ENCODE measurements at regions of chr9 and their contacts with region 1.

Region 1: DNA sequence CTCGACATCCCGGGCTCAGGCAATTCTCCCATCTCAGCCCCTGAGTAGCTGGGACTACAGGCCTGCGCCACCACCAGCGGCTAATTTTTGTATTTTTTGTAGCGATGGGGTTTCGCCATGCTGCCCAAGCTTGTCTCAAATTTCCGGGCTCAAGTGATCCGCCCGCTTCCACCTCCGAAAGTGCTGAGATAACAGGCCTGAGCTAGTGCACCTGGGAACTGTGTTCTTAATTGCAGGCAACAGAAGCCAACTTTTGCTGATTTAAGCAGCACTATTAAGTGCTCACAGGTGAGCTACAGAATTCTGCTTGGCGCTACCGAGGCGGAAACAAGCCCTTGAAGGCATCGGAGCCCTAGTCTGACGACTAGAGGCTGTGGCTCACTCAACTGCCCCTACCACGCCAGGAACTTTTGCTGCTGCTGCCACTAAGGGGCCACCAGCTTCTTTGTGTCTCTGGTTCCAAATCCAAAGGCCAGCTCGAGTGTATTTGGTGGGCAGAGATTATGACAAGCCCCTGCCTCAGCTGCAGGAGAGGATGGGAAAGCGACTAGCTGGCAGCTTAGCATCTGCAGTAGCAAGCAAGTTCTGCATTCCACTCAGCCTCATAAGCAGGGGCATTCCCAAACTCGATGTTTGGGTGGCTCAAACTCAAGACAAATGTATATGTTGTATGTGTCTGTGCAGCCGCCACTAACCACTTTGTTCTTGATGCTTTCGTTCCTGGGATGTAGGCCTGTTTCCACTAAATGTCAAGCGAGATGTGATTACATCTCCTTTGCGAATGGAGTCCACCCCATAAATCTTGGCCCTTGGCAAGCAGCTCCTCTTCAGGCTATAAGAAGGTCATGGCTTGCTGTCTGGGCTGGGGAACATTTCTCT is 10.6 kb upstream of the HMCN2 start:
- DNase-seq: no peak
- H3K4me3 ChIP-seq: no peak overlapping the region
- H3K27ac ChIP-seq: no peak overlapping the region
- H3K4me1 ChIP-seq: no peaks in the 10 kb centered on the region
- H3K27me3 ChIP-seq: no peaks in the 10 kb centered on the region
- CTCF ChIP-seq: no peak

Region 2: DNA sequence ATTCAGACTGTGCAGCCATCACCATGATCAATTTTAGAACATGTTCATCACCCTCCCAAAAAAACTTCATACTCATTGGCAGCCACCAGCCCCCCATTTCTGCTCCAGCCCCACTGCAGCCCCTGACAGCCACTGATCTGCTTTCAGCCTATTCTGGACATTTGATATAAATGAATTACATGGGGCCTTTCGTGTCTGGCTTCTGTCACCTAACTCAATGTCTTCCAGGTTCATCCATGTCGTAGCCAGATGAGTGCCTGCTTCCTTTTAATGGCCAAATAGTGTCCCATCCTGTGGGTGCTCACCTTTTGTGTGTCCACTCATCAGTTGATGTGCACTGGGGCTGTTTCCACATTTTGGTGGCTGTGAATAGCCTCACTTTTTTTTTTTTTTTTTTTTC is 74.1 kb after region 1 on chr9:
- CTCF ChIA-PET with region 1: interaction called, 10 read pairs
- POLR2A ChIA-PET with region 1: no interaction called
- intact Hi-C with region 1: no loop called
- DNase-seq: no peak
- H3K4me3 ChIP-seq: no peak overlapping the region
- H3K27ac ChIP-seq: no peak overlapping the region
- H3K4me1 ChIP-seq: no peaks in the 10 kb centered on the region
- H3K27me3 ChIP-seq: peaks cover 62% of the 10 kb centered on the region
- CTCF ChIP-seq: no peak